GM10248 (cell line): ENCODE measurements at regions of chr2 and their contacts with region 1.

Region 1: GRCh38 chr2:219057709-219058540 is 2.8 kb downstream of the IHH start:
- DNase-seq: peak; percentile 90
- CTCF ChIP-seq: peak; percentile 99

Region 2: DNA sequence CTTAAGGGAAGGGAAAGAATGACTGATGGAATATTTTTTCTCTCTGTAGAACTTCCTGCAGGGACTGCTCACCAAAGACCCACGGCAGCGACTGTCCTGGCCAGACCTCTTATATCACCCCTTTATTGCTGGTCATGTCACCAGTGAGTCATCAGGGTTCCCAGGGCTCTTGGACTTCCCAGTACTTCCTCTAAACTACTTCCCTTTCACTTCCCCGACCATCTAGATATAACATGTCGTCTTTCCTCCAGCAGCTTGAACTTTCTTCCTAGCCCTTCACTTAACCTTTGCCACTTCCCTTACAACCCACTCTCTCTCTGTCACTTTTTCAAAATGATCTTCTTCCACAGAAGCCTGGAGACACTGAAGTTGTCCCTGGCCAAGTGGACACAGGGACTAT is 378.8 kb before region 1 on chr2:
- CTCF ChIA-PET with region 1: no interaction called
- POLR2A ChIA-PET with region 1: no interaction called
- DNase-seq: no peak
- CTCF ChIP-seq: no peak

Region 3: DNA sequence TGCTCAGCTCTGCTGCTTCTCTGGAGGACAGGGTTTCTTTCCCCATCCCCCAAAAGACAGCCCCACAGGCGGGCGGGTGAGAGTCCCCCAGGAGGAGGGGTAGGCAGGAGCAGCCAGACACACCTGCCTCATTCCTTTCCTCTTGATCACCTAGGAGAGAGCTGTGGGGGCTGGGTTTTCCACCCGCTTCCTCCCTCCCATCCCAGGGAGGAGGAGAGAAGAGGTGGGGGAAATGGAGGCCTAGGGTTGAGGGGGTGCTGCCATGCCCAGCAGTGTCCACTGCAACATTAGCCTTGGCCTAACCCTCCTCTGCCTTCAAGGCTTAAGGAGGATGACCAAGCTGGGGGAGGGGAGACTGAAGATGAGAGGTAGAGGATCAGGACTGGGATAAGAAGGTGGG is 162.6 kb before region 1 on chr2:
- CTCF ChIA-PET with region 1: no interaction called
- POLR2A ChIA-PET with region 1: no interaction called
- DNase-seq: no peak
- CTCF ChIP-seq: no peak

Region 4: GRCh38 chr2:219041252-219041651 is 16.7 kb before region 1 on chr2 and contains the start of gene CFAP65:
- CTCF ChIA-PET with region 1: interaction called, 16 read pairs
- POLR2A ChIA-PET with region 1: no interaction called
- DNase-seq: no peak
- CTCF ChIP-seq: no peak

Region 5: GRCh38 chr2:219087361-219087760 is 29.4 kb after region 1 on chr2:
- CTCF ChIA-PET with region 1: interaction called, 14 read pairs
- POLR2A ChIA-PET with region 1: no interaction called
- DNase-seq: no peak
- CTCF ChIP-seq: no peak

Region 6: GRCh38 chr2:219119422-219120043 is 61.6 kb after region 1 on chr2:
- CTCF ChIA-PET with region 1: interaction called, 144 read pairs
- POLR2A ChIA-PET with region 1: no interaction called
- DNase-seq: peak; percentile 65
- CTCF ChIP-seq: peak; percentile 78

Region 7: GRCh38 chr2:219142329-219142728 is 84.4 kb after region 1 on chr2:
- CTCF ChIA-PET with region 1: interaction called, 28 read pairs
- POLR2A ChIA-PET with region 1: no interaction called
- DNase-seq: no peak
- CTCF ChIP-seq: no peak

Region 8: GRCh38 chr2:219294356-219295351 is 236.7 kb after region 1 on chr2:
- CTCF ChIA-PET with region 1: interaction called, 12 read pairs
- POLR2A ChIA-PET with region 1: no interaction called
- DNase-seq: peak; percentile 98
- CTCF ChIP-seq: peak; percentile 99